Astrocyte of the spinal cord (primary cell): ENCODE measurements at regions of chr9 and their contacts with region 1.

Region 1: GRCh38 chr9:79129865-79130480 is 441.8 kb upstream of the TLE4 start:
- DNase-seq: peak; percentile 68
- H3K4me3 ChIP-seq: no peak overlapping the region
- CTCF ChIP-seq: peak; percentile 91

Region 2: GRCh38 chr9:79053598-79053997 is 76.4 kb before region 1 on chr9:
- in situ Hi-C with region 1: no loop called
- DNase-seq: peak; percentile 4
- H3K4me3 ChIP-seq: no peak overlapping the region
- CTCF ChIP-seq: no peak

Region 3: DNA sequence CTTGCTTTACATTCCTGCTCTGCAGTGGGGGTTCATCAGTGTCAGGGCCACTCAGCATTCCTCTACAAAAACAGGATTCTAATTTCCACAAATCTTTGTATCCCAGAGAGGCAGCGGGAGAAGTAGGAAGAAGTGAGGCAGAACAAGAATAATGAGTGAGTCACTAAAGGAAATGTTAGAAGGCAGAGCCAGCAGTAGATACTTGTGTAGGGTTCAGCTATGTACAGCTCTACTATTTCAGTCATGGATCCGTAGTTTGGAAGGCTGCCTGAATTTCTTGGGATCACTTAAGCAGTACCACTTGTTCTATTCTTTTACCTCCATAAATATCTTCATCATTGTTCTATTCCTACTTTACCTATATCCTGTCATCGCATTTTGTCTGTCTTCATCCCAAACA is 195.5 kb after region 1 on chr9:
- in situ Hi-C with region 1: no loop called
- DNase-seq: peak; percentile 15
- H3K4me3 ChIP-seq: no peak overlapping the region
- CTCF ChIP-seq: no peak

Region 4: DNA sequence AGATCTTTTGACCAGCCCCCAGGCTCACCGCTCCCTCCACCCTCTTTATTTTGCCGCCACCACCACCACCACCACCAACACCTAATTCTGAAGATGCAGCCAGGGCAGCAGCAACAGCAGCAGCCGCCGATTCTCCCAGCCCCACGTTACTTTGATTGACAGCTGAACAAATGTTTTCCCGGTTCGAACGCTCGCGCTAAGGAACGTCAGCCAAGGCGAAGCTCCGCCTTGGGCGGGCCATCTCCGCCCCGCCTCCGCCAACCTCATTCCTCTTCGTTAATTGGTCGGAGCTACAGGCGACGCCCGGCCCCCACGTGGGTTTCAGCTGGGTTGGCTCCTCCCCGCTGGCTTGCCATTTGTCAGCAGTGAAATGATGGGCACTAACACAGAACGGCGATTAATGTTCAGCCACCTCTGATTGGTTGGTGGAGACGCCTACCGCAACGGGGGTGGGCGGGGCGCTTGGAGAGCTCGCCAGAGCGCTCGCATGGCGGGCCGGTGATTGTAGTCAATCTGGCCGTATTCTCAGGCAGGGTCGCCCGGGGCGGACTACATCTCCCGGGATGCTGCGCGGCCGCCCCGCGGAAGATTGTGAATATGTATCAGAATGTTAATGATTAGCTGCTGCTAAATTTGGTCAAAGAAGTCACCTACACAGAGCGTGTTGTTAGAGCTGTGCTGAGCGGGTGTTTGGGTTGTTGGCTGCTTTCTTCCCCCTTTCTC is 441.5 kb after region 1 on chr9 and contains the start of gene TLE4:
- in situ Hi-C with region 1: loop called (anchors 25 kb)
- DNase-seq: peak; percentile 100
- H3K4me3 ChIP-seq: peak within 1 kb of the TSS; percentile 87
- CTCF ChIP-seq: no peak